BJ (cell line): ENCODE measurements at regions of chr12 and their contacts with region 1.

Region 1: GRCh38 chr12:59087077-59087673 is 166.9 kb upstream of the LRIG3 start:
- DNase-seq: no peak
- H3K4me3 ChIP-seq: no peak overlapping the region
- H3K27me3 ChIP-seq: no peaks in the 10 kb centered on the region
- CTCF ChIP-seq: peak; percentile 71

Region 2: GRCh38 chr12:58425481-58426392 is 661.4 kb before region 1 on chr12:
- CTCF ChIA-PET with region 1: no interaction called
- POLR2A ChIA-PET with region 1: interaction called, 10 read pairs
- DNase-seq: peak; percentile 89
- H3K4me3 ChIP-seq: no peak overlapping the region
- H3K27me3 ChIP-seq: no peaks in the 10 kb centered on the region
- CTCF ChIP-seq: no peak

Region 3: DNA sequence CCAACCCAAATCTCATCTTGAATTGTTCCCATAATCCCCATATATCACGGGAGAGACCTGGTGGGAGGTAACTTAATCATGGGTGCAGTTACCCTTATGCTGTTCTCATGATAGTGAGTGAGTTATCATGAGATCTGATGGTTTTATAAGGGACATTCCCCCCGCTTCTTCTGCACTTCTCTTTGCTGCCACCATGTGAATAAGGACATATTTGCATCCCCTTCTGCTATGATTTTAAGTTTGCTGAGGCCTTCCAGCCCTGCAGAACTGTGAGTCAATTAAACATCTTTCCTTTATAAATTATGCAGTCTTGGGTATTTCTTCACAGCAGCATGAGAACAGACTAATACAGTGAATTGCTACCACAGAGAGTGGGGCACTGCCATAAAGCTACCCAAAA is 345.9 kb before region 1 on chr12:
- CTCF ChIA-PET with region 1: no interaction called
- POLR2A ChIA-PET with region 1: interaction called, 13 read pairs
- DNase-seq: no peak
- H3K4me3 ChIP-seq: no peak overlapping the region
- H3K27me3 ChIP-seq: no peaks in the 10 kb centered on the region
- CTCF ChIP-seq: no peak